ENCODE measurements at regions of chr10 and their contacts with region 1.

Region 1: DNA sequence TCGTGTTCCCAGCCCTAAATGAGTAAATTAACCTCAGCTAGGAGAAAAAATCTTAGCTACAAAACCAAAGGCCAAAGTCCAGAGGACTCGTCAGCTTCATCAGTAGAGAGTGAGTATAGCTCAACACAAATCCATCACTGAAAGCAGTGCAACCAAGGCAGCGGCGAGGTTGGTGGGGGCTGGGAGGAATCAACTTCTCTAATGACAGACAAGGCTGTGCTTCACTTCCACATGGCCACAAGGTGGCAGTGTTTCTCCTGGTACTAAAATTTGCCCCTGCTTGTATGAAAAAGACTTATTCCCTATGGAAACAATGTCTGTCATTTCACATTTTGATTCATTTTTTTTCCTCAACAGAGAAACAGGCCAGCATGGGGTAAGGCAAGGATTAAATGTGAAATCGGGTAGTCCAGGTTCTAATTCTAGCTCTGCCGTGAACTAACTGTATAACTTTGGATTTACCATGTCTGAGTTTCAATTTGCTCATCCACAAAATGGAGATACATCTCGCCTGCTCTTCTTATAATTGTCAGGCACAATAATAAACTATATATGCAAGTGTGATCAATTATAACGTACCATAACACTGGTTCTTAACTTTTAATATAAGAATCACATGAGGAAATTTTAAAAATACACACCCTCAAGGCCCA is 39.3 kb downstream of the FAS start:
- DNase-seq: peak; percentile 43 to 85
- ATAC-seq: peak; percentile 79 to 84 (median 83)
- H3K4me3 ChIP-seq: no peak overlapping the region
- H3K4me3 Mint-ChIP-seq: no peak overlapping the region
- H3K27ac ChIP-seq: no peak overlapping the region
- H3K27ac Mint-ChIP-seq: no peak overlapping the region
- H3K4me1 ChIP-seq: peaks cover 4% of the 10 kb centered on the region
- H3K4me1 Mint-ChIP-seq: peaks cover 0 to 5% of the 10 kb centered on the region in 2 donors
- H3K27me3 ChIP-seq: no peaks in the 10 kb centered on the region
- H3K27me3 Mint-ChIP-seq: no peaks in the 10 kb centered on the region
- CTCF ChIP-seq: peak; percentile 93

Region 2: GRCh38 chr10:88372051-88372715 is 657.7 kb before region 1 on chr10:
- intact Hi-C with region 1: no loop called
- DNase-seq: no peak
- ATAC-seq: no peak
- H3K4me3 ChIP-seq: no peak overlapping the region
- H3K4me3 Mint-ChIP-seq: no peak overlapping the region
- H3K27ac ChIP-seq: no peak overlapping the region
- H3K27ac Mint-ChIP-seq: no peak overlapping the region
- H3K4me1 ChIP-seq: no peaks in the 10 kb centered on the region
- H3K4me1 Mint-ChIP-seq: no peaks in the 10 kb centered on the region
- H3K27me3 ChIP-seq: no peaks in the 10 kb centered on the region
- H3K27me3 Mint-ChIP-seq: peaks cover 0 to 9% of the 10 kb centered on the region in 2 donors
- CTCF ChIP-seq: no peak

Region 3: DNA sequence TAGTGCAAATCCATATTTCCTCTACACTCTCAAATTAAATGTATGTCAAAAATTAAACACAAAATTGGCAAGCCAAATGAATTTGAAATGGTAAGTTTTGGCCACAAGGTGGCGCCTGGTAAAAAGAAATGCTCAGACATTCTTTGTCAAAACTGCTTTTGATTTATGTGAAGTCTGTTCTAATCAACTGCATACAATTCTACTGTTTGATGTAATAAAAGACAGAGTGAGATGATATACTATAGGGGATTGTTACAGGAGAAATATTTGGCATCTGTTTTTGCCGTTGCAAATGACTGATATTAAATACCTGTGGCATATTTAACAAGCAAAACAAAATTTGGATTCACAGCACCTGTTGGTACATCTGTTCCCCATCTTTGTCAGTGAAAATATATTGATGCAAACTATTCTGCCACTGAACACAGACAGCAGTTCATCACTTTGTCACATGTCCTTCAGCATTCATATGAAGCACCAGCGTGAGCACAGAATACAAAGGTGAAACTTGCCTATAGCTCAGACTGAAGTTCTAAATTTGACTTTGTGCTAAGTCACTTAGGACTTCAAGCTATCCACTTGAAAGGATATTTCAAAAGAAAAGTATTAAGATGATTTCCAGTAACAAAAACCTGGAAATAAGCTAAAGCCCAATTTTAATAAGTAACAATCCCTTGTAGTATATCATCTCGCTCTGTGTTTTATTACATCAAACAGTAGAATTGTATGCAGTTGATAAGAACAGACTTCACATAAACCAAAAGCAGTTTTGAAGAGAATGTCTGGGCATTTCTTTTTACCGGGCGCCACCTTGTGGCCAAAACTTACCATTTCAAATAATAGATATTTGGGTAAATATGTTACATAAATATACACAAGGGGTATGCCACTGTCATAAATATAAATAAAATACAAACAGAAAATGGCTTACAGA is 187.4 kb after region 1 on chr10:
- intact Hi-C with region 1: loop called (anchors 1 kb)
- DNase-seq: peak; percentile 45 to 81
- ATAC-seq: peak; percentile 51 to 67 (median 63)
- H3K4me3 ChIP-seq: no peak overlapping the region
- H3K4me3 Mint-ChIP-seq: no peak overlapping the region
- H3K27ac ChIP-seq: peak overlapping the region; percentile 26
- H3K27ac Mint-ChIP-seq: peak overlapping the region in 1 of 2 donors; percentile 70
- H3K4me1 ChIP-seq: no peaks in the 10 kb centered on the region
- H3K4me1 Mint-ChIP-seq: peaks cover 10 to 14% of the 10 kb centered on the region in 2 donors
- H3K27me3 ChIP-seq: no peaks in the 10 kb centered on the region
- H3K27me3 Mint-ChIP-seq: no peaks in the 10 kb centered on the region
- CTCF ChIP-seq: peak; percentile 74